ENCODE measurements at regions of chr7 and their contacts with region 1.

Region 1: DNA sequence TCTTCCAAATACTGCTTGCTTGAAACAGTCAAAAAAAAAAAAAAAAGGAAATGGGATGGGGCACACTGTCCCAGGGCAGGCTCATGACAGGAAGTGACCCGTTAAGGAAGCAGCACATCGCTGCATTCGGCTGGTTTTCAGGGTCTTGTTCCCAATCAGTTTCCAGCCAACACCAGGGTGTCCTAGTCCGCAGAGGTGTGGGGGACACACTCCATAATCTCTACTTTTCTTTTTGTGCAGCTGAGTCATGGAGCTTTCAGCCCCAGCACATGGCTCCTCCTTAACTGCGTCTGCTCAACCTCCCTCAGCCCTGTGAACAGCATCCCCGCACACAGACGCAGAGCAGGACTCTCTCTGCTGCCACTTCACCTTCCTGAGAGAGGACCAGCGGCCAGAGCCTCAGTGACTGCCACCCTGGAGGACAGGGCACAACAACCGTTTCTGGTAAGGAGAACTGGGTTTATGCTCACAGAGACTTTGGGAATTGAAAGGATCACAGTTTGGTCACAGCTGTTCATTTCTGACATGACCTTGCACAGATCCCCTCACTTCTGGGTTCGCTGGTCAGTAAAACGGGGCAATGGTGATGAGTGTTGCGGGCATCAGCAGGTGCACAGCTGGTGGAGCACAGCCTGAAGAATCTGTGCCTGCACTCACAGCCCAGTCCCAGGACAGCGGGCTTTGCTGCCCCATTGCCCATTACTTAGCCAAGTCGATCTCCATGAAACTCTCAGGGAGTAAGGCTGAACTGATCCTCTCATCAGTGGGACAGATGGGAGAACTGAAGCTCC is at the start of gene GIMAP5:
- DNase-seq: peak in 6 of 9 donors; percentile 47 to 57 (median 56)
- ATAC-seq: peak; percentile 79
- H3K4me3 ChIP-seq: peak within 1 kb of the TSS; percentile 84
- H3K4me3 Mint-ChIP-seq: peak within 1 kb of the TSS; percentile 90 to 100 (median 98)
- H3K27ac ChIP-seq: peak within 1 kb of the TSS; percentile 82
- H3K27ac Mint-ChIP-seq: peak within 1 kb of the TSS; percentile 87 to 99 (median 96)
- H3K4me1 ChIP-seq: peaks cover 49 to 56% of the 10 kb centered on the region in 2 donors
- H3K4me1 Mint-ChIP-seq: peaks cover 56 to 73% (median 65%) of the 10 kb centered on the region in 7 donors
- H3K27me3 ChIP-seq: no peaks in the 10 kb centered on the region
- H3K27me3 Mint-ChIP-seq: no peaks in the 10 kb centered on the region
- total RNA-seq, gene GIMAP5: 58.1 to 422 (median 214) TPM

Region 2: GRCh38 chr7:150356265-150356897 is 381.1 kb before region 1 on chr7:
- CTCF ChIA-PET with region 1: no interaction called
- POLR2A ChIA-PET with region 1: no interaction called
- intact Hi-C with region 1: loop called in 1 of 2 experiments (anchors 5 kb)
- DNase-seq: peak in 7 of 9 donors; percentile 32 to 59 (median 53)
- ATAC-seq: peak; percentile 59
- H3K4me3 ChIP-seq: no peak overlapping the region
- H3K4me3 Mint-ChIP-seq: peak overlapping the region in 4 of 10 donors; percentile 12 to 32 (median 22)
- H3K27ac ChIP-seq: peak overlapping the region; percentile 51
- H3K27ac Mint-ChIP-seq: peak overlapping the region in 6 of 9 donors; percentile 32 to 77 (median 36)
- H3K4me1 ChIP-seq: peaks cover 6 to 28% of the 10 kb centered on the region in 2 donors
- H3K4me1 Mint-ChIP-seq: peaks cover 17 to 43% (median 41%) of the 10 kb centered on the region in 7 donors
- H3K27me3 ChIP-seq: no peaks in the 10 kb centered on the region
- H3K27me3 Mint-ChIP-seq: peaks cover 0 to 10% (median 0%) of the 10 kb centered on the region in 5 donors

Region 3: DNA sequence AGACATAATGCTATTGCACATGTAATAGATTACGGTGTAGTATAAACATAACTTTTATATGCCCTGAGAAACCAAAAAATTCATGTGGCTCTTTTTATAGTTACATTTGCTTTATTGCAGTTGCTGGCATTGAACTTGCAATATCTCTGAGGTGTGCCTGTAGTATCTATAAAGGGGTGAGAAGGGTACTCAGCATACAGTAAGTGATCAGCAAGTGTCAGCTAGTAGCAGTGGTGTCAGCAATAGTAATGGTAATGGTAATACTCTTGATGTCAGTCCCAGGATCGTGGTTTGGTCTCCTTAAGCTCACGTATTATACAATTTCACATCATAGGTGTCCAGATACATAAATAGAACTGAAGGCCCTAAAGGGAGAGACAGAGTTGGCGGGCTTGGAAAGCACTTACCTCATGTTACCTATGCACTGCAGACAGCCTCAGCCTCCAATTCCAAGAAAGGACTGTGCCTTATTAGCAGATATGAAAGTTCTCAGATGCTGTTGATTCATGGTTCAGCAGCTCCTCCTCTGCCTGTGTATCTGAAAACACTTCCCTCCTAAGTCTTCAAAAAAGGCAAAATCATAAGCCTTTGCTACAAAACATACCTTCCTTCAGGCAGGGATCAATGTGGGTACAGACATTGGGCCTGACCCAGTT is 229.4 kb before region 1 on chr7:
- CTCF ChIA-PET with region 1: interaction called, 5 read pairs
- POLR2A ChIA-PET with region 1: interaction called, 212 read pairs
- intact Hi-C with region 1: no loop called
- DNase-seq: peak in 1 of 9 donors; percentile 22
- ATAC-seq: peak; percentile 56
- H3K4me3 ChIP-seq: peak overlapping the region; percentile 52
- H3K4me3 Mint-ChIP-seq: peak overlapping the region; percentile 67 to 99 (median 88)
- H3K27ac ChIP-seq: peak overlapping the region; percentile 74
- H3K27ac Mint-ChIP-seq: peak overlapping the region; percentile 92 to 98 (median 95)
- H3K4me1 ChIP-seq: peaks cover 61 to 93% of the 10 kb centered on the region in 2 donors
- H3K4me1 Mint-ChIP-seq: peaks cover 54 to 98% (median 94%) of the 10 kb centered on the region in 7 donors
- H3K27me3 ChIP-seq: no peaks in the 10 kb centered on the region
- H3K27me3 Mint-ChIP-seq: no peaks in the 10 kb centered on the region

Region 4: GRCh38 chr7:150620617-150621371 is 116.7 kb before region 1 on chr7:
- CTCF ChIA-PET with region 1: no interaction called
- POLR2A ChIA-PET with region 1: interaction called, 152 read pairs
- intact Hi-C with region 1: no loop called
- DNase-seq: no peak
- ATAC-seq: no peak
- H3K4me3 ChIP-seq: no peak overlapping the region
- H3K4me3 Mint-ChIP-seq: peak overlapping the region; percentile 27 to 73 (median 54)
- H3K27ac ChIP-seq: peak overlapping the region; percentile 60
- H3K27ac Mint-ChIP-seq: peak overlapping the region; percentile 64 to 97 (median 88)
- H3K4me1 ChIP-seq: peaks cover 0 to 25% of the 10 kb centered on the region in 2 donors
- H3K4me1 Mint-ChIP-seq: peaks cover 25 to 84% (median 68%) of the 10 kb centered on the region in 7 donors
- H3K27me3 ChIP-seq: no peaks in the 10 kb centered on the region
- H3K27me3 Mint-ChIP-seq: no peaks in the 10 kb centered on the region

Region 5: DNA sequence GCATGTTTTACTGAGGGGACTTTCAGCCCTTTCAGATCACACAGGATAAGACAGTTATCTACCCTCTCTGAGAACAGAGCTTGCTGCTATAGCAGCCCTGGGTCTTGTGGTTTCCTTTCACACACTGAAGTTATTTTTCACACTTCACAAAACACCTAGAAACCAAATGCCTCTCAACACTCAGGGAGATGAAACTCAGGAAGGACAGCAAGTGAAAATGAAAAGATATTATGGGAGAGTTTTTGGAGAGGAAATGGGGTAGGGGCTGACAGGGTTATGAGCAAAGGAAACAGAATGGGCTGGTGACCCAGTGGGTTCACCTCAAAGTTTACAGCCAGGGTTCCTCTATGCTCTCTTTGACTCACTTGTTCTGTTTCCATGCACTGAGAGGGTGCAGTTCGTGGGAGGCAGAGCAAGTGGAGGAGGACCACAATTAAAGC is 69.0 kb before region 1 on chr7:
- CTCF ChIA-PET with region 1: interaction called, 4 read pairs
- POLR2A ChIA-PET with region 1: interaction called, 37 read pairs
- intact Hi-C with region 1: loop called in 1 of 2 experiments (anchors 1 kb)
- DNase-seq: peak in 8 of 9 donors; percentile 66 to 87 (median 81)
- ATAC-seq: peak; percentile 88
- H3K4me3 ChIP-seq: peak overlapping the region; percentile 30
- H3K4me3 Mint-ChIP-seq: peak overlapping the region; percentile 57 to 85 (median 72)
- H3K27ac ChIP-seq: peak overlapping the region; percentile 78
- H3K27ac Mint-ChIP-seq: peak overlapping the region; percentile 73 to 100 (median 97)
- H3K4me1 ChIP-seq: peaks cover 71 to 86% of the 10 kb centered on the region in 2 donors
- H3K4me1 Mint-ChIP-seq: peaks cover 58 to 99% (median 94%) of the 10 kb centered on the region in 7 donors
- H3K27me3 ChIP-seq: no peaks in the 10 kb centered on the region
- H3K27me3 Mint-ChIP-seq: no peaks in the 10 kb centered on the region

Region 6: DNA sequence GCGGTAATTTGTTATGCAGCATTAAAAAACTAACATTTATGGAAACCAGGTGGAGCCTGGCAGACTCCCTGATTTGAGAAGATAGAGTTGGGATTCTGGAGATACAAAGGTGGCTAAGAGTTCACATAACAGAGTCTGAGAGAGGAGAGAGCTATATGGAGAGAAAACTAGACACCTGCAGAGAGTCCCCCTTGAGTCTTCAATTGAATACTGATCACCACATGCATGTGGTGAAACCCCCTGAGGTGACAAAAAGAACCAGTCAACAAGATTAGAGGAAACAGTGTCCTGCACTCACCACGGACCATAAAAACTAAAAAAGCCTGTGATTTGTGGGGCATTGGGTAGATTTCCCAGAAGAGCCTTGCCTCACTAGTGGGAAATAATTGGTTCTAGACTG is 41.8 kb before region 1 on chr7:
- CTCF ChIA-PET with region 1: no interaction called
- POLR2A ChIA-PET with region 1: interaction called, 151 read pairs
- intact Hi-C with region 1: no loop called
- DNase-seq: no peak
- ATAC-seq: no peak
- H3K4me3 ChIP-seq: no peak overlapping the region
- H3K4me3 Mint-ChIP-seq: no peak overlapping the region
- H3K27ac ChIP-seq: no peak overlapping the region
- H3K27ac Mint-ChIP-seq: peak overlapping the region in 1 of 9 donors; percentile 26
- H3K4me1 ChIP-seq: peaks cover 0 to 3% of the 10 kb centered on the region in 2 donors
- H3K4me1 Mint-ChIP-seq: peaks cover 0 to 25% (median 13%) of the 10 kb centered on the region in 7 donors
- H3K27me3 ChIP-seq: no peaks in the 10 kb centered on the region
- H3K27me3 Mint-ChIP-seq: no peaks in the 10 kb centered on the region

Region 7: DNA sequence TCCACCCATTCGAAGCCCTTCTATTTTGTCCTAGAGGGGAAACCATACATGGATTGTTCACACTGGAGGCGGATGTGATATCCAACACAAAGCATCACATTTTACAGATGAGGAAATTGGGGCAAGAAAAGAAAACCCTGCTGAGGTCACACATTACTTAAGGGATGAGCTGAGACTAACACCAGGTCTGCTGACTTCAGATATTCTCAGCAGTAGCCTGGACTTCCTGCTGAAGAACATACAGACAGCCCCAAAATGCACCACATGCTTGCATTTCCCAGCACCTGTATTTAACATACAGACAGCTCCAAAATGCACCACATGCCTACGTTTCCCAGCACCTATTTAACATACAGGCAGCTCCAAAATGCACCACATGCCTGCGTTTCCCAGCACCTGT is 10.9 kb after region 1 on chr7:
- CTCF ChIA-PET with region 1: interaction called, 3 read pairs
- POLR2A ChIA-PET with region 1: interaction called, 212 read pairs
- intact Hi-C with region 1: loop called in 1 of 2 experiments (anchors 1 kb)
- DNase-seq: no peak
- ATAC-seq: peak; percentile 62
- H3K4me3 ChIP-seq: peak overlapping the region; percentile 17
- H3K4me3 Mint-ChIP-seq: peak overlapping the region; percentile 21 to 100 (median 88)
- H3K27ac ChIP-seq: peak overlapping the region; percentile 82
- H3K27ac Mint-ChIP-seq: peak overlapping the region; percentile 86 to 97 (median 95)
- H3K4me1 ChIP-seq: peaks cover 60 to 83% of the 10 kb centered on the region in 2 donors
- H3K4me1 Mint-ChIP-seq: peaks cover 46 to 97% (median 94%) of the 10 kb centered on the region in 7 donors
- H3K27me3 ChIP-seq: no peaks in the 10 kb centered on the region
- H3K27me3 Mint-ChIP-seq: no peaks in the 10 kb centered on the region

Region 8: DNA sequence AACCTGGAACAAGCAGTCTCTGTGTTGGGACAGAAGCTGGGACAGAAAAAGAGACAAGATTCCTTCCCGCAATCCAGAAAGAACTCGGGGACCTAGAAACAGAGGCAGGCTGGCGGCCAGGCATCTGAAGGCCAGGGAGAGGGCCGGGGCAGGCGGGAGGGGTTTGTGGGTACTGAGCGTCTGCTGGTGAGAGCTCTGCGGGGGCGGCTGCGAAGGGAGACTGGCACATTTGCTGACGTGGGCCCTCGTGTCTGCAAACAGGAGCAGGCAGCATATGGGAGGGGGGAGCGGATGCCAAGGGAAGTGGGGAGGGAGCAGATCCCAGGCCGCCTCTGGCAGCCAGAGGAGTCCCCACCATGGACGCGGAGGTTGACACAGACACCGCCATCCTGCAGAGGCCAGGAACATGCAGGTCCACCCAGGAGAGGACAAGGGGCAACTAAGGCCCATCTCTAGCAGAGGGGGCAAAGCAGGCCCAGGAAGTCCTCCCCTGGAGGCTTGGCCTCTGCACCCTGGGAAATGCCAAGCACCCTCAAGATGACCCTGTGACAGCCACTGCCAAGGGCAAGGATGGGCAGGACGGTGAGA is 208.5 kb after region 1 on chr7:
- CTCF ChIA-PET with region 1: no interaction called
- POLR2A ChIA-PET with region 1: no interaction called
- intact Hi-C with region 1: no loop called
- DNase-seq: no peak
- ATAC-seq: no peak
- H3K4me3 ChIP-seq: no peak overlapping the region
- H3K4me3 Mint-ChIP-seq: peak overlapping the region in 1 of 10 donors; percentile 20
- H3K27ac ChIP-seq: no peak overlapping the region
- H3K27ac Mint-ChIP-seq: no peak overlapping the region
- H3K4me1 ChIP-seq: peaks cover 12 to 16% of the 10 kb centered on the region in 2 donors
- H3K4me1 Mint-ChIP-seq: peaks cover 5 to 30% (median 25%) of the 10 kb centered on the region in 7 donors
- H3K27me3 ChIP-seq: no peaks in the 10 kb centered on the region
- H3K27me3 Mint-ChIP-seq: peaks cover 0 to 10% (median 0%) of the 10 kb centered on the region in 5 donors